GM18951 (cell line): ENCODE measurements at regions of chr9 and their contacts with region 1.

Region 1: DNA sequence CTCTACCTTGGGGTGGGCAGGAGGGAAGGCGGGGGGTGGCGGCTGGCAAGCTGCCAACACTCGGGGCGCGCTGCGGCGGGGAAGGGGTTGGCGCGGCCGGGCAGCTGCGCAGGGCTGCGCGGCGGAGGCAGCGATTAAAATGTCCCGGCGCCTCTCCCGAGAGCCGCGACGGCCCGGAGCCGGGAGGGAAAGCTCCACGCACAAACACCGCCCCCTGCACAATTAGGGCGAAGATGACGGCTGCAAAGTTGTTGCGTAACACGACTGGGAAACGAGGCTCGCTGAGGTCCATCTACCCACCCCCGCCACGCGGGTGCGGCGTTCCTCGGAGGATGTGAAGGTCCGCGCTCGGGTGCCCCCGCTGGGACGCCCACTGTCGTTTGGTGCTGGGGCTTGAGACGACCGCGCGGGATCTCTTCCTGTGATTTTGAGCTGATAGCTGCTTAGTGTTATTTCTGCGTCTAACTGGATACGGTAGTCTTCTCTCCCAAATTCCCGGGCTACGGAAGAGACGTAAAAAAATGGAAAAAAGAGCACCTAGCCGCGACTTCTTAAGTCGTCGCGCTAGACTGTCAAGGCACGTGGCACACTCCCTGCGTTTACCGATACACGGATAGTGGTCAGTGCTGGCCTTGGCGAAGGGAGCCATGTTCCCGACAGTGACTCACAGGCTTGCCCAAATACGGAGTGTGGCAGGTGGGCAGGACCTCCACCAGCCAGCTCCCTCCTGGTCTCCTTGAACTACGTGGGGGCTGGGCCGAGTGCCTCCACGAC is 958 bp upstream of the NFIL3 start:
- POLR2A ChIP-seq: no peak

Region 2: GRCh38 chr9:90914868-90915483 is 509.6 kb before region 1 on chr9:
- in situ Hi-C with region 1: loop called (anchors 5 kb)
- POLR2A ChIP-seq: no peak

Region 3: GRCh38 chr9:91036826-91037510 is 387.6 kb before region 1 on chr9:
- in situ Hi-C with region 1: loop called (anchors 25 kb)
- POLR2A ChIP-seq: no peak

Region 4: DNA sequence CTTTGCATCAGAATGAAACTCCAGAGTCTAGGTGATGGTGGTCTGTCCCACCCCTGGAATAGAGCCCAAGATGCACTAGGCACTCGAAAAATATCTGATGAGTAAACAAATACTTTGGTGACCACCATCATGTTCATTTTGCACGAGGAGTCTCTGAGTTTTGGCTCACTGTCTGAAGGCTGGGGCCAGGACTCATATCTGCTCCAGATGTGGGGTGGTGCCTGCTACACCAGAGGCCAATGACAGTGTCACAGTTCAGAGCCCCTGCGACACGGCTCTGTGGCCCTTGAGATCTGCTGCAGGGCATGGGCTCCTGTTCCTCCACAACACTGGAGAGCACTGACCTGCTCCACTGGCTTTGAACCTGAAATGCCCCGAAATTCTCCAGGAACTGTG is 360.9 kb after region 1 on chr9:
- in situ Hi-C with region 1: no loop called
- POLR2A ChIP-seq: no peak